ENCODE measurements at regions of chr2 and their contacts with region 1.

Region 1: GRCh38 chr2:219689676-219690628 is 62.5 kb downstream of the SLC4A3 start:
- DNase-seq: peak; percentile 66

Region 2: GRCh38 chr2:219658196-219658846 is 31.6 kb before region 1 on chr2:
- CTCF ChIA-PET with region 1: no interaction called
- POLR2A ChIA-PET with region 1: no interaction called
- DNase-seq: no peak

Region 3: DNA sequence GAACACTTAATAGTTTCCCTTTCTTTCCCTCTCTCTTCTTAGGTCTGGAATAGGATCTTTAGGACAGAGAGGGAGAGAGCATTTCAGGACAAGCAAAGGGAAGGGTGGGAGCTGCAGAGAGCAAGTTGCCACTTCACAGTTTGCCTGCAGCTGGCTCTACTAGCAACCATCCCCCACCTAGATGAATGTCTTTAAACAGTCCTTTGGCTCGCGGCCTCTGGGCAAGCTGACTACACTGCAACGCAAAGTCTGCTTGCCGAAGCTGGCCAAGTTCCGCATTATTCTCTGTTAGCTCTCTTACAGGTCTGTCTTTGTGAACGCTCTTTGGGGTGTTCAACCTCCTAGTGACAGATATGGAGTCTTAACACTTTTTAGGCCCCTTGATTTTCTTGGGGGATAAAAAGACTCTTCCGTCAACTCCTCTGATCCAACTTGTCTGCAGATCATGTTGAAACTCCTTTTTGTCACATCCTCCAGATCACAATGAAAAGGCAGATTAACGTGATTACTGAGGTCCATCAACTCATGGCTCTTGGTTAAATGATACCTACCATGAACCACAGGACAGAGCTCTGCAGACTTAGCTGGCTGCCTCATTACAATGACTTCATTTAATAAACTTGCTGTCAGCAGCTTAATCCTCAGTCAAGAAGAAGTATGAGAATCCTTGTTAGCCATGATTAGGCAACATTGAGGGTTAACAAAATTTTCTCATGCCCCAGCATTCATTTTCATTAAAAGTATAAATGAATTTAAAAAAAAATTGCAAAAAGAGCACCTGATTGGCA is 12.1 kb after region 1 on chr2:
- CTCF ChIA-PET with region 1: interaction called, 14 read pairs
- POLR2A ChIA-PET with region 1: interaction called, 4 read pairs
- DNase-seq: no peak

Region 4: DNA sequence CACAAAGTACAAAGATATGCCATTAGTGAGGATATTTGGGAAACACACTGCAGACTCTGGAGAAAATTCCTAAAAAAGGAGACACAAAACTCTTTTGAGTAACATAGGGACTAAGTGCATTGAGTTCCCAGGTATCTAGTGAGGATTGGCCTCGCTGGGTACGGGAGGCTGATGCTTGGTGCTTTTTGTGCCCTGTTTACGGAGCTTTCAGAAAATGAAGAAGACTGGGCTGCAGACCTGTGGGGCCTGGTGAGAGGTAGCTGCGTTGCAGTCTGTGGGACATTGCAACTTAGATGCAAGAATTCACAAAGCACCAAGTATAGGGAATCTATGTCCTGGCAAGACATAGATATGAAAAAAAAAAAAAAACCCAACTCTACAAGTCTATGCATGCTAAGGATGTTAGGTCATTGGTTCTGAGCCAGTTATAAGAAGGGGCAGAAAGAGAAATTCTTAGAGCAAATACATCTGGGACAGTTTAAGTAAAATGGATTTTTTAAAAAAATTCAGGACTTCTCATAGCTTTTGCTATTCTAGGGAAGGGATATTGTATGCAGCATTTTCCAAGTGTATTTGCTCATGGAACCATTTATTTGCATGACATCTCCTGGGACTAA is 93.5 kb after region 1 on chr2:
- CTCF ChIA-PET with region 1: no interaction called
- POLR2A ChIA-PET with region 1: no interaction called
- DNase-seq: no peak